ENCODE measurements at regions of chr19 and their contacts with region 1.

Region 1: GRCh38 chr19:913080-913748 is at the start of gene R3HDM4:
- DNase-seq: peak in 1 of 2 experiments; percentile 70
- H3K4me3 ChIP-seq: peak within 1 kb of the TSS; percentile 73
- H3K27ac ChIP-seq: no peak within 1 kb of the TSS
- H3K4me1 ChIP-seq: peaks cover 18% of the 10 kb centered on the region
- H3K27me3 ChIP-seq: peaks cover 9% of the 10 kb centered on the region
- CTCF ChIP-seq: no peak
- total RNA-seq, gene R3HDM4: 55.8 and 57.5 TPM in 2 replicates

Region 2: DNA sequence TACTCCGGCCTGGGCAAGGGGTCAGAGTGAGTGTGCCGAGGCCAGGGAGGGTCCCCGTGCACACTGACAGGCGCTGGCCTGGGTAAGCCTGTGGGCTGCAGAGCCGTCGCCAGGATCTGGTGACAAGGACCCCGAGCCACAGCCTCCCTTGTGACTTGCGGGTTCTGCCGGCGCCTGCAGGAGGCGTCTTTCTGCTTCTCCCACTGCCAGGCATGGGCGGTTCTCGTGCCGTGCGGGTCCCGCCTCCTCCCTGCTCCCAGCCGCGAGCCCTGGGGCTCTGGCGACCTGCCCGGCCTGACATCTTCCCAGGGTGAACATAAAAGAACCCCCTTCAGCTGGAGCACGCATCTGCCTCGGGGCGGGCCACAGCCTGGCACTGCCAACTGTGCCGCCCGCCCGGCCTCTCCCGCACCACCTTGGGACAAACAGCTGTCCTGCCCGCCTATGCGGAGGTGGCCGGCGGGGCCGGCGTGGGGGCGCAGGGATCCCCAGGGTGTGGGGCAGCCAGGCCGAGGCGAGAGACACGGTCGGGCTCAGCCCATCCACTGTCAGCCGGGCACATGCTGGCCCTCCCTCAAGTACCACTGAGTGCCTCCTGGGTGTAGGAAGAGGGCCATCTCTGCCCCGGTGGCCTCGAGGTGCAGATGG is 325.0 kb before region 1 on chr19:
- CTCF ChIA-PET with region 1: no interaction called
- POLR2A ChIA-PET with region 1: interaction called, 15 read pairs
- intact Hi-C with region 1: no loop called
- DNase-seq: peak; percentile 75 to 92
- H3K4me3 ChIP-seq: peak overlapping the region; percentile 9; the same call in 1 of the 2 replicates
- H3K27ac ChIP-seq: no peak overlapping the region
- H3K4me1 ChIP-seq: peaks cover 15% of the 10 kb centered on the region; the same call in 1 of the 2 replicates
- H3K27me3 ChIP-seq: peaks cover 11% of the 10 kb centered on the region; the same call in 1 of the 2 replicates
- CTCF ChIP-seq: peak; percentile 69

Region 3: DNA sequence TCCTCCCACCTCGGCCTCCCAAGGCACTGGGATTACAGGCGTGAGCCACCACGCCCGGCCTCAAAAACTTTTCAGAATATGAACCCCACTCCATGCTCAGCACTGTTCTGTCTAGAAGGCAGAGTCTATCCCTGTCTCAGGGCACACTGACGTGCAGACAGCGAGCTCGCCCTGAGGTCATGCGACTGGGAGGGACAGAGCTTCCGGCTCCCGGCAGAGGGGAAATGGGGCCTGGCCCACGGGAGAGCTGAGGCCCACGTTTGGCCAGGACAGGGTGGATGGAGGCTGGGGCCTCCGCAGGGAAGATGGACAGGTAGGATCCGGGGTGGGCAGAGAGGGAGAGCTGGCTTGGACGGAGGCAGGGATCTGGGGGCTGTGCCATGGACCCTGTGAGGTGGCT is 88.3 kb before region 1 on chr19:
- CTCF ChIA-PET with region 1: interaction called, 10 read pairs
- POLR2A ChIA-PET with region 1: no interaction called
- intact Hi-C with region 1: no loop called
- DNase-seq: no peak
- H3K4me3 ChIP-seq: no peak overlapping the region
- H3K27ac ChIP-seq: no peak overlapping the region
- H3K4me1 ChIP-seq: peaks cover 6% of the 10 kb centered on the region
- H3K27me3 ChIP-seq: 0 out of 2 replicates have a peak, but pooled peaks cover 4% of the 10 kb centered on the region
- CTCF ChIP-seq: no peak

Region 4: DNA sequence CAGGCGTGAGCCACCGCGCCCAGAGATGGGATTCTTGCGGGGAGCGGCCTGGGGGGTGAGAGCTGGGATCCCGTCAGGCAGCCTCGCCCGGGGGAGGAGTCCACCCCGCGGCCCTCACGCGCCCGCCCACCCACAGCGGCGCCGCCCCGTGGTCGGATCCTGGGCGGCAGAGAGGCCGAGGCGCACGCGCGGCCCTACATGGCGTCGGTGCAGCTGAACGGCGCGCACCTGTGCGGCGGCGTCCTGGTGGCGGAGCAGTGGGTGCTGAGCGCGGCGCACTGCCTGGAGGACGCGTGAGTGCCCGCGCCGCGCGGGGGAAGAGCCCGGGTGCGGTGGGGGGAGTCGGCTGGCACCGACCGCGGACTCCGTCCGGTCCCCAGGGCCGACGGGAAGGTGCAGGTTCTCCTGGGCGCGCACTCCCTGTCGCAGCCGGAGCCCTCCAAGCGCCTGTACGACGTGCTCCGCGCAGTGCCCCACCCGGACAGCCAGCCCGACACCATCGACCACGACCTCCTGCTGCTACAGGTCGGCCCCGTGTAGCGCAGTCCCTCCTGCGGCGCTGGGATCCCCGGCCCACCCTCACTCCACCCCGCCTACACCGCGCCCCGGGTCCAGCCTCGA is 52.6 kb before region 1 on chr19:
- CTCF ChIA-PET with region 1: no interaction called
- POLR2A ChIA-PET with region 1: no interaction called
- intact Hi-C with region 1: loop called (anchors 2 kb)
- DNase-seq: peak; percentile 54 to 92
- H3K4me3 ChIP-seq: peak overlapping the region; percentile 39; the same call in 1 of the 2 replicates
- H3K27ac ChIP-seq: no peak overlapping the region
- H3K4me1 ChIP-seq: peaks cover 12% of the 10 kb centered on the region
- H3K27me3 ChIP-seq: no peaks in the 10 kb centered on the region
- CTCF ChIP-seq: no peak

Region 5: GRCh38 chr19:883661-884211 is 29.5 kb before region 1 on chr19:
- CTCF ChIA-PET with region 1: no interaction called
- POLR2A ChIA-PET with region 1: interaction called, 5 read pairs
- intact Hi-C with region 1: loop called (anchors 2 kb)
- DNase-seq: peak; percentile 97 to 98
- H3K4me3 ChIP-seq: no peak overlapping the region
- H3K27ac ChIP-seq: no peak overlapping the region
- H3K4me1 ChIP-seq: peaks cover 14% of the 10 kb centered on the region
- H3K27me3 ChIP-seq: no peaks in the 10 kb centered on the region
- CTCF ChIP-seq: peak; percentile 74

Measured in PC-9 (cell line).